GM23248 (cell line): ENCODE measurements at regions of chr16 and their contacts with region 1.

Region 1: DNA sequence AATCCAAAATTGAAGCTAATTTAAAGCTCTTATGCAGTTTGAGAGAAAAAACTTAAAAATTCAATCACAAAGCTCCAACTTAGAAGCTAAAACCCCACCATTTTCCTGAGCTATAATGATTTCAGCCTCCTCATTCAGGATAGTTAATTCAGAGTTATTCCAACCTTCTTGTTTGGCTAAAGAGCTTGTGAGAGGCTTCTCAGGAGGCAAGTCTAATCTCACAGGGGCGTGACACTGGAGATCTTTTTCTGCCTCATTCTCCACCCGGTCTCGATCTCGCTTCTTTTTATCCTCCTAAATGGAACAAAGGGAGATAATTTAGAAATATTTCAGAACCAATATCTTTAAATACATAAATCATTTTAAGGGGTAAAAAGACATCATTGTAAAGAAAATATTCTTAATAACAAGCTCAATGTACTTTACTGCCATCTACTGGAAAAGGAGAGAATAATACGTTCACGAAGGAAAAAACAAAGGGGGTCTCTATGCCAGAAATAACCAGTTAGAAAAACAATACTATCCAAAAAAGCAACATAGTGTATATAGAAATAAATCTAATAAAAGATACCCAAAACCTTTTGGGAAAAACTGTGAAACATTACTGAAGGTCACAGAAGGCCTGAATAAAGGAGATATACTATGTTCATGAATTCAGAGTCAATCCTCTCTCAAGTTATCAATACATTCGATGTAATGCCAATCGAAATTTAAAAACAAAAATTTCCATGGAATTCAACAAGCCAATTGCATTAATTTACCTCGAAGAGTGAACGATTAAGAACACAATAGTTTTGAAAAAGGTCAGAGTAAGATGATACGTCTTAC is 13.9 kb downstream of the BRD7 start:
- DNase-seq: peak; percentile 54
- H3K4me3 ChIP-seq: no peak overlapping the region
- H3K27ac ChIP-seq: no peak overlapping the region
- H3K4me1 ChIP-seq: no peaks in the 10 kb centered on the region
- H3K27me3 ChIP-seq: no peaks in the 10 kb centered on the region

Region 2: DNA sequence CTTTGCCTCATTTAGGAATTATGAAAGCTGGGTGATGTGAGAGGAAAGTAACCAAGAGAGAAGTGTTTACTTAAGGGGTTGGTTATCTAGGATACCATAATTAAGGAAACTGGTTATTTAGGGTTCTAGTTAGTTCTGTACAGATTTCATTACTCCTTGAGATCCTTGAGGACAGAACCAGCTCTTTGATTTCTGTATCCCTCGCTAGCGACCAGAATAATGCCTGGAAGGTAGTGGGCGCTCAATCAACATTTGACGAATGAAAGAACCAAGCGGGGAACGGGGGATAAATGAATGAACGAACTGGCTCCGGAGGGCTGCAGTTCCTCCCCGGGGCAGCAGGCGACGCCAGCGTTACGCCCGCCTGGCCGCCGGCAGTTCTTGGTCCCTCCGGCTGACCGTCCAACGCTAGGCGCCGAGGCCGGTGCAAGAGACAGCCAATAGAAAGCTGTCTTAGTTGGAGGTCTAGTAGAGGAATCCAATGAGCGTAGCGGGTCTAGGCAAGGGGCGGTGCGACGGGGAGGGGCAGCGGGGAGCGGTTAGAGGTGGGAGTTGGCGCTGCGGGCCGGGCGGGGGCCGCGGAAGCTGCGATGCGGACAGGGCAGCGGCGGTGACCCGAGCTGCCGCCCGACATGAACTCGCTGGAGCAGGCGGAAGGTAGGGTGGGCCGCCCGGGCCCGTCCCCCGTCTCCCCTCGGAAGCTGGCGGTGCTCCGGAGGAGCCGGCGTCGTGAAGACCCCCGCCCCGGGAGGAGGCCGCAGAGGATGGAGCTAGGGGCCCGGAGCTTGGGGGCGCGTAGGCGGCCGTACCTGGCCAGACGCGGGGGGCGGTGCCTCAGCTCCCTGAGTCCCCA is 329.9 kb before region 1 on chr16 and contains the start of gene CNEP1R1:
- in situ Hi-C with region 1: loop called (anchors 10 kb)
- DNase-seq: peak; percentile 98
- H3K4me3 ChIP-seq: peak within 1 kb of the TSS; percentile 100
- H3K27ac ChIP-seq: 0 out of 2 replicates have a peak within 1 kb of the TSS, but pooled peaks have one; percentile 37
- H3K4me1 ChIP-seq: peaks cover 16% of the 10 kb centered on the region
- H3K27me3 ChIP-seq: no peaks in the 10 kb centered on the region
- total RNA-seq, gene CNEP1R1: 42.8 and 43.3 TPM in 2 replicates

Region 3: DNA sequence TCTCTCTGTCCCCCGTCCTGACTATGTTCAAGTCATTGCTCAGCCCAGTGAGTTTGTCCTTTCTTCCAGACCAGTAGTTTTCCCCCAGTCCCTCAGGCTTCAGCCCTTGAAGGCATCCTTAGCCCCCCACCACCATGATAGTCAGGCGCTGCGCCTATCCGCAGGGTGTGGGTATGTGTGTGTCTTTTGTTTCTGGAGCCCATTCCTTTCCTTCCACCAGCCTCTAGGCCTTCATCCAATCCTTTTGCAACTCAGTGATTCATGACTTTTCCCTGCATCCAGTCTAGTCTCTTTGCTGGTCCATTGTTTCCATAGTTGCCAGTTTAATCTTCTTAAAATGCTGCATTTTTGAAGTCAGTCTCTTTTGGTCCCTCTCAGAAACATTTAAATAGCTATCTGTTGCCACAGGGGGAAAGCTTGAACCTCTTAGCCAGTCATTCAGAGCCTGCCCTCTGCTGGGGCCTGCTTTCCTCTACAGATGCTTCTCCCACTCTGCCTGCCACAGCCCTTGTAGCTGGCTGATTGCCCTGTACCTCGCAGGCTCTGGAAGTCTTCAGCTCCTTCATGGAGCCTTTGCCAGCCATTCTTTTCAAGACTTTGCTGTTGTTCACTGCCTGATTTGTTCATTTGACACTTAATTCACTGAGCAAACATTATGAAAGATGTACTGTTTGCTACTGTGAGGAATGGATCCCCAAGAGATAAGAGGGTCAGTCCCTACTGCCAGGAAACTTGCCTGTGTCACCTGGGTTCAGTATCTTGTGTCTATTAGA is 144.4 kb before region 1 on chr16:
- in situ Hi-C with region 1: loop called (anchors 10 kb)
- DNase-seq: peak; percentile 94
- H3K4me3 ChIP-seq: no peak overlapping the region; the same call in 1 of the 2 replicates
- H3K27ac ChIP-seq: peak overlapping the region; percentile 52
- H3K4me1 ChIP-seq: peaks cover 48% of the 10 kb centered on the region
- H3K27me3 ChIP-seq: no peaks in the 10 kb centered on the region

Region 4: GRCh38 chr16:50603206-50604064 is 248.6 kb after region 1 on chr16:
- in situ Hi-C with region 1: no loop called
- DNase-seq: peak; percentile 59
- H3K4me3 ChIP-seq: no peak overlapping the region
- H3K27ac ChIP-seq: no peak overlapping the region
- H3K4me1 ChIP-seq: 0 out of 2 replicates have a peak, but pooled peaks cover 5% of the 10 kb centered on the region
- H3K27me3 ChIP-seq: 0 out of 2 replicates have a peak, but pooled peaks cover 6% of the 10 kb centered on the region